Esophagus muscularis mucosa (tissue), 4 donors: ENCODE measurements at regions of chr19 and their contacts with region 1.

Region 1: DNA sequence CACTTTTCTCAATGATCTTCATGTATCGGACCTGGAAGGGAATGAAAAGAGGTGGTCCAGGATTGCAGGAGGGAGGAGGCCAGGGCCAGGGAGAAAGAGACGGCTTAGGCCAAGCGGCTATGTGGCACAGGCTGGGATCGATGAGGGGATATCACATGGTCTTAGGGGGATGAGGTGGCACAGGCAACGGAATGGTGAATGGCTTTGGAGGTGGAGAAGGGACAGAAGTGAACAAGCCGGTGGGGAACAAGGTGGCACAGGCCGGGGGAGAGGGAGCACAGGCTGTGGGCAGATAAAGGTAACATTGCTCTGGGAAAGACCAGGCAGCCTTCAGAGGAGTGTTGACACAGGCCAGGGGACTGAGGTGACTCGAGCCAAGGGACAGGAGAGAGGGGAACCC is 5.7 kb upstream of the CDKN2D start:
- DNase-seq: no peak
- H3K4me3 ChIP-seq: no peak overlapping the region
- H3K27ac ChIP-seq: no peak overlapping the region
- H3K4me1 ChIP-seq: peaks cover 10 to 17% (median 14%) of the 10 kb centered on the region in 4 donors
- H3K27me3 ChIP-seq: peaks cover 0 to 10% (median 0%) of the 10 kb centered on the region in 4 donors
- CTCF ChIP-seq: no peak
- EP300 ChIP-seq: no peak
- POLR2A ChIP-seq: no peak

Region 2: DNA sequence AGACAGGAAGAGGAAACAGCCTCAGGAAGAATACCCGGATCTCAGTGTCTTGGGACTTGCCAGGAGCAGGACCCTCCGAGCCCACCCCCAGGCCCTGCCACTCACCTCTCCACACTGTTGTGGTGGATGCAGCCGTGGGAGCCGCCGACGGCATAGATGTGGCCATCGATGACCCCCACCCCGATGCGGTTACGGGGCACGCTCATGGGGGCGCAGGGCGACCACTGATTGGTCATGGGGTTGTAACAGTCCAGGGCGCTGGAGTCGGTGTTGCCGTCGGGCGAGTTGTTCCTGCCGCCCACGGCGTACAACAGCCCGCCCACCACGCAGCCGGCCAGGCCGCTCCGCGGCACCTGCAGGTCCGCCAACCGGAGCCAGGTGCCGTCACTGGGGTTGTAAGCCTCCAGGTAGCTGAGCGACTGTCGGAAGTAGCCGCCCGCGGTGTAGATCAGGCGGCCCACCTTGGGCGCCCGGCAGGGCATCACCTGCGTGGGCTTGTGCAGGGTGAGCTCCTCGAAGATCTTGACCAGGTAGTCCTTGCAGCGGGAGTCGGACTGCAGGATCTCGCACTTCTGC is 82.9 kb before region 1 on chr19:
- intact Hi-C with region 1: loop called (anchors 5 kb)
- DNase-seq: no peak
- H3K4me3 ChIP-seq: no peak overlapping the region
- H3K27ac ChIP-seq: no peak overlapping the region
- H3K4me1 ChIP-seq: peaks cover 0 to 28% (median 5%) of the 10 kb centered on the region in 4 donors
- H3K27me3 ChIP-seq: no peaks in the 10 kb centered on the region
- CTCF ChIP-seq: no peak
- EP300 ChIP-seq: no peak
- POLR2A ChIP-seq: no peak

Region 3: GRCh38 chr19:10543420-10544241 is 30.8 kb before region 1 on chr19 and contains the start of gene ATG4D:
- intact Hi-C with region 1: no loop called
- DNase-seq: peak; percentile 94
- H3K4me3 ChIP-seq: peak within 1 kb of the TSS; percentile 89 to 100 (median 97)
- H3K27ac ChIP-seq: peak within 1 kb of the TSS; percentile 90 to 95 (median 92)
- H3K4me1 ChIP-seq: peaks cover 19 to 32% (median 27%) of the 10 kb centered on the region in 4 donors
- H3K27me3 ChIP-seq: peaks cover 0 to 4% (median 0%) of the 10 kb centered on the region in 4 donors
- CTCF ChIP-seq: no peak
- EP300 ChIP-seq: no peak
- POLR2A ChIP-seq: peak; percentile 78
- total RNA-seq, gene ATG4D: 18.2 to 44.1 (median 29.7) TPM